ENCODE measurements at regions of chr7 and their contacts with region 1.

Region 1: DNA sequence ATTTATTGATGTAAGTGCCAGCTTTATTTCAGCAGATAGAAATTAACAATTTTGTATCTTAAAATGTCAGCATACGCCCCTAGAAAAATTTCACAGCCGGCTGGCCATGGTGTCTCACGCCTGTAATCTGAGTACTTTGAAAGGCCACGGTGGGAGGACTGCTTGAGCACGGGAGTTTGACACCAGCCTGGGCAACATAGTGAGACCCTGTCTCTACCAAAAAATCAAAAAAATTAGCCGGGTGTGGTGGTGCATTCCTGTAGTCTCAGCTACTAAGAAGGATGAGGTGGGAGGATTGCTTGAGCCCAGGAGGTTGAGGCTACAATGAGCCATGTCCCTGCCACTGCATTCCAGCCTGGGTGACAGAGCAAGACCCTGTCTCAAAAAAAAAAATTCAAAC is 14.1 kb downstream of the GTF2I start:
- DNase-seq: no peak
- ATAC-seq: no peak
- H3K4me3 ChIP-seq: no peak overlapping the region
- H3K27ac ChIP-seq: peak overlapping the region; percentile 66; the same call in 1 of the 2 replicates
- H3K4me1 ChIP-seq: peaks cover 49% of the 10 kb centered on the region
- H3K27me3 ChIP-seq: no peaks in the 10 kb centered on the region
- CTCF ChIP-seq: no peak

Region 2: GRCh38 chr7:74683799-74684198 is 12.2 kb after region 1 on chr7:
- CTCF ChIA-PET with region 1: no interaction called
- POLR2A ChIA-PET with region 1: interaction called, 20 read pairs
- in situ Hi-C with region 1: no loop called
- intact Hi-C with region 1: no loop called
- DNase-seq: no peak
- ATAC-seq: no peak
- H3K4me3 ChIP-seq: no peak overlapping the region
- H3K27ac ChIP-seq: no peak overlapping the region
- H3K4me1 ChIP-seq: peaks cover 6% of the 10 kb centered on the region; the same call in 1 of the 2 replicates
- H3K27me3 ChIP-seq: no peaks in the 10 kb centered on the region
- CTCF ChIP-seq: no peak

Region 3: DNA sequence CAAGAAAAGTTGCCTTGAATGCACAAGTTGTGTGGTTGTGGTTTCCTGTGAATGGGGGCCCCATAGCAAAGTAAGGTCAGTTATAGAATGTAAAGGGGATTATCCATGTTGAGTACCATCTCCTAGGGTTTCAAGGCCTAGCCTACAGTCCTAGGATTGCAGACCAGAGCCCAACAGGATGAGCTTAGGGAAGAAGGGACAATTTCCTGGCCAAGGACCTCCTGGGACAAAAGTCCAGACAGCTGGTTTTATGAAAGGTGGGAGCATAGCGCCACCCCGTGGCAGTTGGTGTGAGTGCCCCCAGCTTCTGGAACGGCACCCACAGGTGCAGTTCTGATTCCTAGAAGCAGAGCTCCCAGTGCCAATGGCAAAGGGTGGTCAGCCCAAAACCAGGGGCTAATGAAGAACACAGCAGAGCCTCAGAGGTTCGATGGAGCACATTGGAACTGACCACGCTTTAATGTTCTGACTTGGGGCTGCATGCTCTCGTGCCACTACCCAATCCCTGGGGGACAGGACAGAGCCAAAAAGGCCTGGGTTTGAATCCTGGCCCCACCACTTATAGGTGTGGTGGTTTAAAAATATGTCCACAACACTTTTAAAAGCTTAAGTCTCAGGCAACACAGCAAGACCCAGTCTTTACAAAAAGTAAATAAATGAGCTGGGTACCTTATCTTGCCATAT is 1348.6 kb after region 1 on chr7:
- CTCF ChIA-PET with region 1: no interaction called
- POLR2A ChIA-PET with region 1: no interaction called
- in situ Hi-C with region 1: no loop called
- intact Hi-C with region 1: no loop called
- DNase-seq: peak; percentile 48
- ATAC-seq: peak; percentile 90
- H3K4me3 ChIP-seq: no peak overlapping the region
- H3K27ac ChIP-seq: no peak overlapping the region
- H3K4me1 ChIP-seq: no peaks in the 10 kb centered on the region
- H3K27me3 ChIP-seq: no peaks in the 10 kb centered on the region
- CTCF ChIP-seq: peak; percentile 88